ENCODE measurements at regions of chr20 and their contacts with region 1.

Region 1: DNA sequence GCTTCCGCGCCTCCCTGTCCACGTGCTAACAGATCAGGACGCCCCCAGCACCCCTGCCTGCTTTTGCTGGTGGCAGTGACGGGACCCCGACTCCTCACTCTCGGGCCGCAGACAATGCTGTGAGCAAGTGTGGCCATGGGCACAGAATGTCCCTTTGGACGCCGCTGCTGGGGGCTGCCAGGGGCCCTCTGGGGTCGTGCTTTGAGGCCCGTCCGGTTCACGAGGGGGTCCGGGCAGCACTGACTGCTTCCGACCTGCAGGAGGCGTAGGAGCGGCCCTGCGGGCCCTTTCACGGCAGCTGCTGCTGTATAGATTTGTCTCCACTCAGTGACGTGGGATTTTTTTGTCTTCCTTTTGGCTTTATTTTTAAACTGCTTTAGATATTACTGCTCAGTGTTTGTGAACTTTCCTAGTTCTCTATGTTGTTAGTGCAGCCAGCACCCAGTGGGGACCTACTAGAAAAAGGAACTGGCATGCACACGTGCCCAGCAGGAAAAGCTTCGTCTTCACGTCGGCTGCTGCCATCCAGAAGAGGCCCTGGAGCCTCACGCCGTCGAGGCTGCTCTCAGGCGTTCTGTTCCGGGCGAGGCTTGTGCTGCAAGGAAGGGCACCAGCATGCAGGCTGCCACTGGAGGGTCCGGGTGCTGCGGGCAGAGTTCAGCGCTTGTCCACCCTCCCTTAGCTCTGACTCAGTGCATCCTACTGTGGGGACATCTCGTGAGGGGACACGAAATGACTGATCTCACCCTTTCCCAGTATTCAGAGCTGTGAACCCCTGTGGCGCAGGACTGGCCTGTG is 21.7 kb downstream of the UCKL1 start:
- DNase-seq: peak in 1 of 2 experiments; percentile 80
- H3K4me3 ChIP-seq: no peak overlapping the region
- H3K27ac ChIP-seq: no peak overlapping the region
- H3K4me1 ChIP-seq: peaks cover 0 to 6% (median under 1%) of the 10 kb centered on the region in 4 experiments; a peak in 3 of 7 replicates
- H3K27me3 ChIP-seq: no peaks in the 10 kb centered on the region
- CTCF ChIP-seq: peak; percentile 61 to 79 (median 76)
- EP300 ChIP-seq: no peak
- POLR2A ChIP-seq: no peak
- RAD21 ChIP-seq: peak; percentile 42 to 52; a peak in 3 of 4 replicates

Region 2: DNA sequence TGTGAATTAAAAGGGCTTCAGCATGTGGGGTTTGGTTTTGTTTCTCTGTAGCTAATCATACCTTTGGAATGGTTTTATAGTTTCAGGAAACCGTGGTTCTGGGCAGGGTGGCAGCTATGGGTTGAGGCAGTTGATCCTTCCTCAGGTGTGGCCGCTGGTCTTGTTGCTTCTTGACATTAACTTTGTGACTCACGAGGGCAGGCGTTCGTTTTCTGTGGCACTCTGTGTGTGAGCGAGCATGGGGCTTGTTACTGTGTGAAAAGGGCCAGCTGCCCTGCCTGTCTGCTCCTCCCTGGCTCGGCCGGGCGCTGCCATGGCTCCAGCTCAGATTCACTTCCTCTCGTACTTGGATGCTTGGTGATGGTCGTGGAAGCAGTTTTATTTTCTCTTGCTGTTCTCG is 23.3 kb before region 1 on chr20:
- CTCF ChIA-PET with region 1: interaction called, 34 read pairs
- POLR2A ChIA-PET with region 1: interaction called, 3 read pairs
- DNase-seq: no peak
- H3K4me3 ChIP-seq: no peak overlapping the region
- H3K27ac ChIP-seq: no peak overlapping the region
- H3K4me1 ChIP-seq: no peaks in the 10 kb centered on the region; a peak in 2 of 7 replicates
- H3K27me3 ChIP-seq: no peaks in the 10 kb centered on the region
- CTCF ChIP-seq: no peak
- EP300 ChIP-seq: no peak
- POLR2A ChIP-seq: no peak
- RAD21 ChIP-seq: no peak

Region 3: DNA sequence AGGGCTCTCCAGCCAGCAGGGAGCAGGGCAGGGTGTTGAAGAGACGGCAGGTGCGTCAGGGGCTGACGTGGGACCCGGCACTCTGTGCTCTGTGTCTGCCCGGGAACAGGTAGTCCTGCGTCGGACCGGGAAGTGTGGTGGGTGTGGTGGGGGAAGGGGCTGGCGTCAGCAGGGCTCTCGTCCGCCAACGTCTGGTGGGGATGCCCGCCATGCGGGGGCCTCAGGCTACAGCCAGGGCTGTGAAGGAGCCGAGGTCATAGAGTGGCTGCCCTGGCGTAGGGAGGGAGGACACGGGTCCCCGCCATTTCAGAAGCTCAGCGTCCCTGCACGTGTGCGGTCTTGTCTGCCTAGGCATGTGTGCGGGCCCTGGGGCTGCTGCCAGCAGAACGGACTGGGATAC is 14.2 kb before region 1 on chr20:
- CTCF ChIA-PET with region 1: interaction called, 57 read pairs
- POLR2A ChIA-PET with region 1: interaction called, 3 read pairs
- DNase-seq: no peak
- H3K4me3 ChIP-seq: no peak overlapping the region
- H3K27ac ChIP-seq: no peak overlapping the region
- H3K4me1 ChIP-seq: no peaks in the 10 kb centered on the region
- H3K27me3 ChIP-seq: no peaks in the 10 kb centered on the region
- CTCF ChIP-seq: no peak
- EP300 ChIP-seq: no peak
- POLR2A ChIP-seq: no peak
- RAD21 ChIP-seq: no peak

Region 4: GRCh38 chr20:63980806-63981728 is 46.6 kb after region 1 on chr20 and contains the start of gene PRPF6:
- CTCF ChIA-PET with region 1: interaction called, 58 read pairs
- POLR2A ChIA-PET with region 1: no interaction called
- DNase-seq: peak; percentile 94 to 95
- H3K4me3 ChIP-seq: peak within 1 kb of the TSS; percentile 68 to 89 (median 83)
- H3K27ac ChIP-seq: peak within 1 kb of the TSS; percentile 88
- H3K4me1 ChIP-seq: peaks cover 4 to 24% (median 12%) of the 10 kb centered on the region in 4 experiments; a peak in 6 of 7 replicates
- H3K27me3 ChIP-seq: peaks cover 0 to 9% (median 2%) of the 10 kb centered on the region in 4 experiments; a peak in 3 of 7 replicates
- CTCF ChIP-seq: peak; percentile 97 to 100 (median 98)
- EP300 ChIP-seq: peak in 1 of 2 experiments; percentile 36; a peak in 1 of 3 replicates
- POLR2A ChIP-seq: peak in 1 of 2 experiments; percentile 87; a peak in 2 of 3 replicates
- RAD21 ChIP-seq: peak; percentile 35 to 47; a peak in 3 of 4 replicates
- total RNA-seq, gene PRPF6: 76.9 and 80.7 TPM in 2 replicates

Region 5: GRCh38 chr20:64131406-64131805 is 196.9 kb after region 1 on chr20:
- CTCF ChIA-PET with region 1: no interaction called
- POLR2A ChIA-PET with region 1: no interaction called
- DNase-seq: peak in 1 of 2 experiments; percentile 38
- H3K4me3 ChIP-seq: no peak overlapping the region
- H3K27ac ChIP-seq: no peak overlapping the region
- H3K4me1 ChIP-seq: no peaks in the 10 kb centered on the region; a peak in 1 of 7 replicates
- H3K27me3 ChIP-seq: no peaks in the 10 kb centered on the region
- CTCF ChIP-seq: peak; percentile 37 to 56 (median 51); a peak in 3 of 4 replicates
- EP300 ChIP-seq: no peak
- POLR2A ChIP-seq: no peak
- RAD21 ChIP-seq: peak; percentile 18 to 37; a peak in 2 of 4 replicates

Region 6: GRCh38 chr20:64168381-64169090 is 234.1 kb after region 1 on chr20:
- CTCF ChIA-PET with region 1: no interaction called
- POLR2A ChIA-PET with region 1: no interaction called
- DNase-seq: no peak
- H3K4me3 ChIP-seq: no peak overlapping the region
- H3K27ac ChIP-seq: no peak overlapping the region
- H3K4me1 ChIP-seq: peaks cover 0 to 5% (median 2%) of the 10 kb centered on the region in 4 experiments; a peak in 3 of 7 replicates
- H3K27me3 ChIP-seq: peaks cover 0 to 7% (median 3%) of the 10 kb centered on the region in 4 experiments; a peak in 3 of 7 replicates
- CTCF ChIP-seq: no peak
- EP300 ChIP-seq: no peak
- POLR2A ChIP-seq: no peak
- RAD21 ChIP-seq: no peak